OCI-LY7 (cell line): ENCODE measurements at regions of chr13 and their contacts with region 1.

Region 1: DNA sequence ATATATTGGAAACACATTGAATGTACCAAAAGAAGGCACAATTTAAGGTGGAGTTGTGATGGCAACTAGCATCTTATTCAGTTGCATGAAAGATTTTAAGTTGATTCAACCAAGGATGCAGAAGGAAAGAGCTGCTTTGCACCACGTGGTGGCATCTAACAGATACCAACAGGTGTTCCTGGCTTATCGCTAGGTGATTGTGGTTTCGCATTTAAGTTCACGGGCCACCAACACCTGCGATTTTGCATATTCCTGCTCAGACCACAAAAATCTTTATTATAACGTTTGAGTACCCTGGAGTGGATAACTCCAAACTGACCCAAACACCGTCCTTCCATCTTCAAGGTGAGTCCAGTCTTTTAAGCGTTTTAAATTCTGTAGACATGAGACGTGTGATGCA is 45.3 kb downstream of the RGCC start:
- DNase-seq: peak; percentile 99
- H3K4me3 ChIP-seq: peak overlapping the region; percentile 64
- H3K27ac ChIP-seq: peak overlapping the region; percentile 98
- H3K4me1 ChIP-seq: peaks cover 89% of the 10 kb centered on the region
- CTCF ChIP-seq: 0 out of 2 replicates have a peak, but pooled peaks have one; percentile 2

Region 2: DNA sequence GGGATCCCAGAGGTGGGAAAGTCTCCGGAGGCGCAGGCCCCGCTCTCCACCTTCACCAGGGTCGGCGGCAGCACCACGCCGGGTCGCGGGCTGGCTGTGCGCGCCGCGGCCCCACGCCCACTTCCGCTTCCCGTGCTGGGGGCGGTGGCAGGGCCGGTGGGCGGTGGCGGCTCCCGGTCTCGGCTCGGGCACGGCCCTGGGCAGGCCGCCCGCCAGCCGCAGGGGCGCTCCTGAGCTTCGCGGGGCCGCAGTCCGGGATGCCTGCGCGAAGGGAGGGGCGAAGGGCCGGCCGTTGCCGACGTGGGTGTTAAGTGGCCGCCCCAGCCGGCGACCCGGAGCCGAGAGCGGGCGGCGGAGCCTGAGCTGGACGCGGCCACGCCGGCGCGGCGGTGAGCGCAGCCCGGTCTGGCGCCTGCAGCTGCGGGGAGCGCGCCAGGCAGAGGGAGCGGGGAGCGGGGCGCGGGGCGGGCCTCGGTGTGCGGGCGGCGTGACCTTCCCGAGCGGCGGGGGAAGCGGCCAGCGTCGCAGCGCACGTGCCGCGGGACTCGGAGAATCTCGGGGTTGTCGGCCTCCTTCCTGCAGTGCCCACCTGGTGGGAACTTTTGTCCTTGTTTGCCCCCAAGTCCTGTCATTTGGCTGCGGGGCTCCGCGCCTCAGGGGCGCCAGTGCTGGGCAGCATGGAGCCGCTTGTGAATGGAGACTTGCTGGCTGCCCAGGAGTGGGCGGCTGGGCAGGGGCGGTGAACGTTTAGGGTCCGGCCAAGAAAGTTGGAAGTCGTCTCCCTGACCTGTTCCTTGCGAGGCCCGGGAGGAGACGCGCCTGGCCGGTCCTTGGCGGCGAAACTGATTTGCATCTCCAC is 713.2 kb before region 1 on chr13 and contains the start of gene SLC25A15:
- CTCF ChIA-PET with region 1: no interaction called
- POLR2A ChIA-PET with region 1: no interaction called
- intact Hi-C with region 1: loop called (anchors 5 kb)
- DNase-seq: peak; percentile 89
- H3K4me3 ChIP-seq: peak within 1 kb of the TSS; percentile 72
- H3K27ac ChIP-seq: peak within 1 kb of the TSS; percentile 92
- H3K4me1 ChIP-seq: peaks cover 46% of the 10 kb centered on the region
- CTCF ChIP-seq: peak; percentile 47
- total RNA-seq, gene SLC25A15: 61.3 and 71.0 TPM in 2 replicates

Region 3: GRCh38 chr13:41310963-41311606 is 191.6 kb before region 1 on chr13 and contains the start of gene NAA16:
- CTCF ChIA-PET with region 1: no interaction called
- POLR2A ChIA-PET with region 1: no interaction called
- intact Hi-C with region 1: loop called (anchors 2 kb)
- DNase-seq: peak; percentile 93
- H3K4me3 ChIP-seq: peak within 1 kb of the TSS; percentile 79
- H3K27ac ChIP-seq: peak within 1 kb of the TSS; percentile 74
- H3K4me1 ChIP-seq: peaks cover 37% of the 10 kb centered on the region
- CTCF ChIP-seq: 0 out of 2 replicates have a peak, but pooled peaks have one; percentile 1
- total RNA-seq, gene NAA16: 22.1 and 22.4 TPM in 2 replicates

Region 4: DNA sequence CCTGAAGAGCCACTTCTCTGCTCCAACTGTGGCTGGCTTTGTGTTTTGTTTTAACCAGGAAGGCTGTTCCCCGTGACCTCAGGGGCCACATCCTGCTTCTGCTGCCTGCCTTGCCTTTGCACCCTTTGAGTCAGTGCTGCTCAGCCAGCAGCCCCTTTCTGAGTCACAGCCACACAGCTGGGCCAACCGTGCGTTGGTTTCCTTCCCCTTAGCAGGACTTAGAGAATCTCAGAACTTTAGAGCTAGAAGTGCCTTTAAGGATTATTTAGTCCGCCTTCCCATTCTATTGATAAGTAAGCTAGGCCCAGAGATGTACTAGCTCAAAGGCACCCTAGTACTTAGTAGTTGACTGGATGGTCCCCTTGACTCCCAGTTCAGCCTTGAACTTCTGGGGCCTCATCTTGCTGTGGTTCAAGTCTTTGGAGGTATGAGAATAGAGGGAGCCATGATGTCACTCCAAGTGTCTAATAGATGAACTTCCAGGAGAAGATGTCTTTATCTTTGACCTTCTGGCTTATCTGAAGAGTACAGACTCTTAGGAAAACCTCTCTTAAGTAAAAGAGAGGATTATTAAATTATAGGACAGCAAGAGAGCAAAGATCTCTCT is 37.3 kb before region 1 on chr13:
- CTCF ChIA-PET with region 1: interaction called, 24 read pairs
- POLR2A ChIA-PET with region 1: interaction called, 82 read pairs
- intact Hi-C with region 1: loop called (anchors 1 kb)
- DNase-seq: peak; percentile 94
- H3K4me3 ChIP-seq: peak overlapping the region; percentile 85
- H3K27ac ChIP-seq: peak overlapping the region; percentile 95
- H3K4me1 ChIP-seq: peaks cover 71% of the 10 kb centered on the region
- CTCF ChIP-seq: no peak

Region 5: GRCh38 chr13:41554626-41555386 is 52.1 kb after region 1 on chr13:
- CTCF ChIA-PET with region 1: no interaction called
- POLR2A ChIA-PET with region 1: interaction called, 4 read pairs
- intact Hi-C with region 1: loop called (anchors 2 kb)
- DNase-seq: peak; percentile 89
- H3K4me3 ChIP-seq: peak overlapping the region; percentile 32
- H3K27ac ChIP-seq: peak overlapping the region; percentile 77
- H3K4me1 ChIP-seq: peaks cover 46% of the 10 kb centered on the region
- CTCF ChIP-seq: 0 out of 2 replicates have a peak, but pooled peaks have one; percentile 21

Region 6: GRCh38 chr13:41652727-41653361 is 150.2 kb after region 1 on chr13:
- CTCF ChIA-PET with region 1: no interaction called
- POLR2A ChIA-PET with region 1: interaction called, 3 read pairs
- intact Hi-C with region 1: loop called (anchors 1 kb)
- DNase-seq: peak; percentile 79
- H3K4me3 ChIP-seq: no peak overlapping the region
- H3K27ac ChIP-seq: peak overlapping the region; percentile 62
- H3K4me1 ChIP-seq: peaks cover 54% of the 10 kb centered on the region
- CTCF ChIP-seq: peak; percentile 98